Posterior cingulate gyrus (tissue), 11 donors: ENCODE measurements at regions of chr1 and their contacts with region 1.

Region 1: GRCh38 chr1:84298328-84298683 is 3.2 kb upstream of the SAMD13 start:
- DNase-seq: peak; percentile 45 to 96 (median 63)

Region 2: DNA sequence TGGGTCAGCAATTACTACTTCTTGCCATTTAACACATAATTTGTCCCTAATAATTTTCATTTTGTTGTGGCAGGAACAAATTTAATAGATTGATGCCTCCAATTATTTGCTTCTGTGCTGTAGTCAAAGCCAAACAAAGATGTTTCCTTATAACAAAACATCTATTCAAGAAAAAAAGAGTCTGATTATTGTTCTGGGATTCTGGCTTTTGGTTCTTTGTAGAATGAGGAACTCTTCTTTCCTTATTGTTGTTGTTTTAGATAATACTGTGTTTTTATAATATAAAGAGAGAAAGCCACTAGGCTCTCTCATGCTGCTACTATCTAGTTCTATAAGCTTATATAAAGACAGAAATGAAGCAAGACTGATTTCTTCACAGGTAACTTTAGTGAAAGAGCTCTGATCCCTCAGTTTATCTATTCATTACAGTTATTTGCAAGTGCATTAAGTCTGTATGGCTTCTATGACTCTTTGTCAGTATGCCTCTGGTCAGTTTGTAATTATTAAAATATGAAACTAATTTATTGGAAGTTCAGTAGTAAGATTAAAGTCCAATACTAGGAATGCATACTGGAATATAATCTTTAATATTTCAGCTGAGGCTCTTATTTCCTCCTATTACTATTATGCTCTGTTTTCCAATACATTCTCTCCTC is 116.8 kb before region 1 on chr1:
- intact Hi-C with region 1: loop called (anchors 10 kb)
- DNase-seq: no peak

Region 3: DNA sequence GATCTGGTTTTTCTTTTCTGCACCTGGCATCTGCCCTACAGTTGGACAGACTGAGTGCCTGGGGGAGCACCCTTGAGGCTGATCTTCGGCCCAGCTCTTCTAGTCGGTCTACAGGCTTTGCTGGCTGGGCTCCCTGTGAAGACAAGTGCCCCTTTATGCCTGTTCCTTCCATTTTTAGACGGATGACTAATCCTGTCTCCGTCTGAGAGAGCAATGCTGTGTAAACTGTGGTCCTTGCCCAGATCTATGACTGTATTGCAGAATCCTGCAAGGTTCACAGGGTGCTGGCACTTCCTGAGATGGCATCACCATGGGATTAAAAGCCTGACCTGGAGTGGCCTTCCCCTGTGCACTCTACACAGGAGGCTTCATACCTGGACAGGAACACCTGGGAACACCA is 44.4 kb before region 1 on chr1:
- intact Hi-C with region 1: loop called (anchors 2 kb)
- DNase-seq: peak; percentile 41 to 95 (median 82)

Region 4: DNA sequence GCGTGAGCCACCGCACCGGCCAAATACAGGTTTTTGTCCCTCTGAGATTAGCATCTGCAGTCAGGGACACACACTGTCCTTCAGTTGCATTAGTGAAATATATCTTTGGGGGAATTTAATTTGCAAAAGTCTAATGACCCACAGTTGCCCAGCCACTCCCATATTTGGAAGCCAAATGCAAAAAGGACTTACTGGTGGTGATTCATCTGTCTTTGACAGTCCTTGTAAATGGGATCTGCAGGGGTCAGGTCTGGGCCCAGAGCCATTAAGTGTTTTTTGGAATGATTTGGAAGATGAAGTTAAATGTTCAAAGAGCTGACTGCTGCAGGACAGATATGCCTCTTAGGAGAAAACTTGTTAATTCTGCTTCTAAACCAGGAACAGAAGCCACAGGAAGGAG is 55.4 kb after region 1 on chr1:
- intact Hi-C with region 1: no loop called
- DNase-seq: no peak

Region 5: DNA sequence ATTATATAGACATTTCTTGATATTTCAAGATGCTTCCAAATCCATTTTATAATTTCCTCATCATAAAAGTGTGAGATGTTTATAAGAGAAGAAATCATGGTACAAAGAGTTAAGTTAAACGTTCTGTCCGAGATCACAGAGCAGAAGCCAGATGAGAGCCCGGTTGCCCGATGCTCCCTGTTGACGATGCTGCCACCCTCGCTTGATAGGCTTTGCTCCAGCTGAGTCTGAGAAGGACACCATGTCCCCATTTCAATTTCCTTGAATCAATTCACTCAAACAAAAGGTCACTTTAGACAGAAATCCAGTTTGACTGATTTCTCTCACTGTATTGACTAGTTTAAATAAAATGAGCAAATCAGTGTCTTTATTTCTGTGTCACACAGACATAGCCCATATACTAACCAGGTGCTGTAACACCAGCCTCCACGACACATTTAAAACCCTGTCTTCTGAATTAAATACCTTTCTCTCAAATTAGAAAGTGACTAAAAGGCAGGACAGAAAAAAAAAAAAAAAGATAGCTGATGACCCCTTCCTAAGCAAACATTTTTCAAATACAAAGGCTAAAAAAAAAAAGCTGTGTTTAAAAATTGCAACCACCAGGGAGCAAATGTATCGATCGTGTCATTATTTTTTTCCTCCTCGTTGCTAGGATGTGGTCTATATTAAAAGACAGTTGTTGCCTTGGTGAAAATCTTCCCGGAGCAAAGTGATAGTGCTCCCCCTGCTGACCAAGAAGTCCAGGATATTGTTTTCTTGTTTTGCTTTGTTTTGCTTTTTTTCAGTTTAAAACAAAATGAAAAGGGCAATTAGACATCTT is 135.2 kb after region 1 on chr1:
- intact Hi-C with region 1: loop called (anchors 2 kb)
- DNase-seq: peak in 8 of 10 donors; percentile 33 to 87 (median 61)